Activated T-helper 1 cell treated with anti-CD3 and anti-CD28 coated beads, Interleukin-12 subunit alpha, Interleukin-12 subunit beta, Interleukin-2, Interleukin-4 antibody, amounts not matched to agents 30 ng/mL and 10 ng/mL and 1 ng/mL, durations not matched to agents 14 hours and 24 hours and 36 hours (primary cell): ENCODE measurements at regions of chr11 and their contacts with region 1.

Region 1: GRCh38 chr11:95790123-95790932 is at the start of gene CEP57:
- DNase-seq: peak; percentile 93
- H3K4me3 Mint-ChIP-seq: peak within 1 kb of the TSS; percentile 96
- H3K27ac Mint-ChIP-seq: peak within 1 kb of the TSS; percentile 100
- H3K4me1 Mint-ChIP-seq: peaks cover 70% of the 10 kb centered on the region
- H3K27me3 Mint-ChIP-seq: no peaks in the 10 kb centered on the region
- total RNA-seq, gene CEP57: 77.1 and 77.7 TPM in 2 replicates

Region 2: DNA sequence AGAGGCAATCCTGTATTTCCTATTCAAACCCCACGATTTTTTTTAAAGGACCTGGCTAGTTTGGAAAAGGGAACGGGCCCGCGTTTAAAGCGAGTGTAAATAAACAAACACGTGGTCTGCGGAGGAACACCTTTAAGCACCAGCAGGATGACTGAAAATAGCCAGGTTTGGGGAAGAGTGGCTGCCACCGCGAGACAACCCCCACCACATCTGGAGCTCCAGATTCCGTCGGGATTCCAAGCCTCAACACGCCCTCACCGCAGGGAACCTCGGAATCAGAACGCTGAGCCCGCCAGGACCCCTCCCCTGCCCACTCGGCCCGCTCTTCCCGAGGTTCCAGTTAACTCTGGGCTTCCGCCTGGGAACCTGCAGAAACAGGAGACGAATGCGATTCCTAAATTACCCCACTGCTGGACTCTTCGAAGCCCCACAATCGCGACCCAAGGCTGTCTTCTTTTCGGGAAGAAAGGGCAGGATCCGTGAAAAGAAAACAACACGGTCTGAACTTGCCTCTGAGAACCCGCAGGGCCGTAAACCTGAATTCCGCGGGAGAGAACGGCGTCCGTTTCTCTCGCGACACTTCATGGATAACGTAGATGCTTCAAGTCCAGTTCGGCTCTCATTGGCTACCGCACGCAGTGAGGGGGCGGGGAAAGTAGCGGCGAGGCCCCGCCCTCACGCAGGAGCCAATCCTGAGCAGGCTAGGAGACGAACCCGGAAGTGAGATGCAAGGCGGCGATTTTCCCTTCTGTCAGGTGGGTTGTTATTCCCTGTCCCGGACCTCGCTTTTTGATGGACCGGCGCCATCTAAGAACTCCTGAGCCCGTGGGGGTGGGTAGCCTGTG is 1296.8 kb before region 1 on chr11 and contains the starts of genes ANKRD49 and MRE11:
- intact Hi-C with region 1: loop called (anchors 1 kb)
- DNase-seq: peak; percentile 96
- H3K4me3 Mint-ChIP-seq: peak within 1 kb of the TSS; percentile 94
- H3K27ac Mint-ChIP-seq: peak within 1 kb of the TSS; percentile 92
- H3K4me1 Mint-ChIP-seq: peaks cover 36% of the 10 kb centered on the region
- H3K27me3 Mint-ChIP-seq: no peaks in the 10 kb centered on the region
- total RNA-seq, gene ANKRD49: 20.0 and 21.2 TPM in 2 replicates
- total RNA-seq, gene MRE11: 43.8 and 45.9 TPM in 2 replicates

Region 3: GRCh38 chr11:95067039-95067840 is 723.1 kb before region 1 on chr11:
- intact Hi-C with region 1: loop called (anchors 1 kb)
- DNase-seq: peak; percentile 72
- H3K4me3 Mint-ChIP-seq: peak overlapping the region; percentile 95
- H3K27ac Mint-ChIP-seq: peak overlapping the region; percentile 96
- H3K4me1 Mint-ChIP-seq: peaks cover 28% of the 10 kb centered on the region
- H3K27me3 Mint-ChIP-seq: peaks cover 23% of the 10 kb centered on the region

Region 4: DNA sequence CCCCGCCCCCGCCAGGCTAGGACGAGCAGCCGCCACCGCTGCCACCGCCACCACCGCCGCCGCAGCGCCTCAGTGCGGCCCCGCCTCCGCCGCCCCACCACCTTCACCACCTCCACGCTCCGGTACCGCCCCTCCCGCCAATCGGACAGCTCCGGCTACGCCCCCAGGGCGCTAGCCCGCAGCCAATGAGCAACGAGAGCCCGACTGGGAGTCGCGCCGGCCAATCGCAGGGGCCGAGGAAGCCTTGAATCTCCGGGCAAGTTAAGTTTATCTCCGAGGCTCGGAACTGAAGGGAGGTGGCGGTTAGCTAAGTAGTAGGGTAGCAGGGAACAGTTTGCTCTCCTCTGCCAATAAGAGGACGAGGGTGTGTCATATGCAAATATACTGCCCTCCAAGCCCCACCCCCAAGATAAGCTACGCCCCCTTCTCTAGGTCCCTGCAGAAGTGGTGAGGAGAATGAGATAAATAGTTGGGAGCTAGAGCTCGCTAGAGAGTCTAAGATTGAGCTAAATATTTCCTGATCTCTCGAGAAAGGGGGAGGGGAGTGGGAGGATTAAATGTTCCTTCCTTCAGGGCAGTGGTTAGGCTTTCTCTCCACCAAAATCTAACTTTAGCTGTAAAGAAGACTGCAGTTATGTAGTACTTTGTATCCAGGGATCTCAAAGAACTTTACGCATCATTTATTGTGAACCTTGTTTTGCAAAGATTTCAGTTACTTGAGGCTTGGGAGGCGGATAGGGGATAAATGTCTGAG is 559.0 kb before region 1 on chr11 and contains the start of gene SESN3:
- intact Hi-C with region 1: loop called (anchors 1 kb)
- DNase-seq: peak; percentile 98
- H3K4me3 Mint-ChIP-seq: peak within 1 kb of the TSS; percentile 96
- H3K27ac Mint-ChIP-seq: peak within 1 kb of the TSS; percentile 88
- H3K4me1 Mint-ChIP-seq: peaks cover 18% of the 10 kb centered on the region
- H3K27me3 Mint-ChIP-seq: peaks cover 2% of the 10 kb centered on the region
- total RNA-seq, gene SESN3: 62.0 and 68.6 TPM in 2 replicates

Region 5: GRCh38 chr11:96012086-96012824 is 221.9 kb after region 1 on chr11:
- intact Hi-C with region 1: loop called (anchors 5 kb)
- DNase-seq: peak; percentile 20
- H3K4me3 Mint-ChIP-seq: no peak overlapping the region
- H3K27ac Mint-ChIP-seq: peak overlapping the region; percentile 75
- H3K4me1 Mint-ChIP-seq: peaks cover 49% of the 10 kb centered on the region
- H3K27me3 Mint-ChIP-seq: no peaks in the 10 kb centered on the region

Region 6: GRCh38 chr11:96424693-96425092 is 634.4 kb after region 1 on chr11:
- intact Hi-C with region 1: loop called (anchors 1 kb)
- DNase-seq: no peak
- H3K4me3 Mint-ChIP-seq: no peak overlapping the region
- H3K27ac Mint-ChIP-seq: no peak overlapping the region
- H3K4me1 Mint-ChIP-seq: peaks cover 6% of the 10 kb centered on the region
- H3K27me3 Mint-ChIP-seq: peaks cover 46% of the 10 kb centered on the region